Dorsolateral prefrontal cortex (tissue), 120 donors: ENCODE measurements at regions of chr19 and their contacts with region 1.

Region 1: GRCh38 chr19:40529093-40529954 is 47.3 kb upstream of the SHKBP1 start:
- DNase-seq: peak; percentile 65 to 91 (median 86)
- H3K4me3 ChIP-seq: peak overlapping the region; percentile 31 to 78 (median 62)
- H3K27ac ChIP-seq: peak overlapping the region in 57 of 59 donors; percentile 2 to 96 (median 80)
- H3K27me3 ChIP-seq: no peaks in the 10 kb centered on the region
- CTCF ChIP-seq: peak; percentile 87 to 99 (median 97)

Region 2: GRCh38 chr19:40294560-40294959 is 234.8 kb before region 1 on chr19:
- intact Hi-C with region 1: no loop called
- DNase-seq: peak in 5 of 10 donors; percentile 50 to 74 (median 68)
- H3K4me3 ChIP-seq: peak overlapping the region in 1 of 59 donors; percentile 26
- H3K27ac ChIP-seq: peak overlapping the region in 58 of 59 donors; percentile 21 to 98 (median 88)
- H3K27me3 ChIP-seq: no peaks in the 10 kb centered on the region
- CTCF ChIP-seq: peak in 1 of 56 donors; percentile 6

Region 3: DNA sequence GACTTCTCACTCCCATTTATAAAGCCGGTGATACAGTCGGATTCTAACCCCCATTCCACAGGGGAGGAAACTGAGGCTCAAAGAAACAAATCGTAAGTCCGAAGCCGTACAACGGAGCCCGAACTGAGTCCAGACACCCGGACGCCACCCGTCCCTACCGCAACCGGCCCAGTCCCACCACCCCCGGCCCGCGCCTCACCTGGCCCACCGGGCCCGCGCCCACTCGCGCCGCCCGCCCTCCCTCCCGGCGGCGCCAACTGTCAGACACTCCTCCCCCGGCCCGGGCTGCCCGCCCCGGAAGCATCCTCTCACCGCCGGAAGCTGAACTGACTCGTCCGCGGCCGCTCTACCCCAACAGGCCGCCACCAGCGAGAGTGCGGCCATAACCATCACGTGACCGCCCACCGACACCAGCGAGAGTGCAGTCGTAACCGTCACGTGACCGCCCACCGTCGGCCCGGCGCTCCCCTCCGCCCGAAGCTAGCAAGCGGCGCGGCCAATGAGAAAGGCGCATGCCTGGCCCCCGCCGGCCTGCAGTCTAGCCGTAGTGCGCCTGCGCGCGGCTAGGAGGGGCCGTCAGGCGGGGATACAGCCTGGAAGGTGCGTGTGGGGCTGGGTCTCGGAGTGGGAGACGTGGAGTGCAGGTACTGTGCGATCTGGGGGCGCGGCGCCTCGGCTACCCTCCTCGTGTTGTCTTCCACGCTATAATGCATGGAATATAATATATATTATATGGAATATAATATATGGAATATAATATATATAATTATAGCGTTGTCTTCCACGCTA is 181.0 kb before region 1 on chr19 and contains the starts of genes C19orf47 and PLD3:
- intact Hi-C with region 1: loop called in 1 of 2 experiments (anchors 5 kb)
- DNase-seq: peak; percentile 99 to 100 (median 100)
- H3K4me3 ChIP-seq: peak within 1 kb of the TSS; percentile 55 to 98 (median 86)
- H3K27ac ChIP-seq: peak within 1 kb of the TSS in 58 of 59 donors; percentile 4 to 95 (median 84)
- H3K27me3 ChIP-seq: no peaks in the 10 kb centered on the region
- CTCF ChIP-seq: peak in 26 of 56 donors; percentile 6 to 54 (median 29)
- total RNA-seq, gene C19orf47: 26.8 to 54.6 (median 37.4) TPM
- total RNA-seq, gene PLD3: 322 to 718 (median 553) TPM

Region 4: GRCh38 chr19:40465557-40466150 is 63.7 kb before region 1 on chr19 and contains the start of gene BLVRB:
- intact Hi-C with region 1: loop called in 1 of 2 experiments (anchors 2 kb)
- DNase-seq: peak; percentile 99 to 100 (median 100)
- H3K4me3 ChIP-seq: peak within 1 kb of the TSS; percentile 41 to 97 (median 78)
- H3K27ac ChIP-seq: peak within 1 kb of the TSS; percentile 26 to 95 (median 81)
- H3K27me3 ChIP-seq: no peaks in the 10 kb centered on the region
- CTCF ChIP-seq: peak in 31 of 56 donors; percentile 8 to 64 (median 29)
- total RNA-seq, gene BLVRB: 22.5 to 59.4 (median 36.1) TPM

Region 5: DNA sequence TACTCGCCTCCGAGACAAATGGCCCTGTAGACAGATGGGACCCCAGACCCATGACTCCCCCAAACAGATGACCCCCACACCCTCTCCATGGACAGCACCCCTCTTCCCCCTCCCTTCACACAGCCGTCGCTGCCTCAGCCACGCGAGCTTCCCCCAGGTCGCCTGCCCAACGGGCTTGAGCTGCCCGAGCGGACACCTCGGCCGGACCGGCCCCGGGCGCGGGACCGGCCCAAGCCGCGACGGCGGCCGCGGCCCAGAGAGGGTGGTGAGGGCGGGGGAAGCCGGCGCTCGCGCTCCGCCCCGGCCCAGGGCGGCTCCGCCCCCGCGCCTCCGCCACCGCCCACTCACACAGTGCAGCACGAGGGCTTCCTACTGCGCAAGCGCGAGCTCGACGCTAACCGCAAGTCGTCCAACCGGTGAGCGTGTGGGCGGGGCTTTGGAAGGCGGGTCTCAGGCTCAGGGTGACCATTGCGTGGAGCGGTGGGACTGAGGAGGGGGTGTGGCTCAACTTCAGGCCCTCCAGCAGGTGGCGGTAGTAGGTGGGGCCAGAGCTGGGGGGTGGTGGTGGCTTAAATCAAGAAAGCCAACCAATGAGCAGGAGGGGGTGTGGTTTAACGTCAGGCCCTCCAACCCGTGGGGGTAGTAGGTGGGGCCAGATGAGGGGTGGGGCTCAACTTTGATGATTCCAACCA is 41.1 kb after region 1 on chr19:
- intact Hi-C with region 1: loop called in 1 of 2 experiments (anchors 2 kb)
- DNase-seq: peak; percentile 85 to 99 (median 98)
- H3K4me3 ChIP-seq: peak overlapping the region in 56 of 59 donors; percentile 20 to 65 (median 44)
- H3K27ac ChIP-seq: peak overlapping the region in 36 of 59 donors; percentile 10 to 80 (median 54)
- H3K27me3 ChIP-seq: peaks cover 0 to 5% (median 0%) of the 10 kb centered on the region in 45 donors
- CTCF ChIP-seq: peak in 23 of 56 donors; percentile 17 to 64 (median 49)

Region 6: GRCh38 chr19:40580619-40581018 is 51.3 kb after region 1 on chr19:
- intact Hi-C with region 1: no loop called
- DNase-seq: no peak
- H3K4me3 ChIP-seq: no peak overlapping the region
- H3K27ac ChIP-seq: no peak overlapping the region
- H3K27me3 ChIP-seq: no peaks in the 10 kb centered on the region
- CTCF ChIP-seq: no peak

Region 7: DNA sequence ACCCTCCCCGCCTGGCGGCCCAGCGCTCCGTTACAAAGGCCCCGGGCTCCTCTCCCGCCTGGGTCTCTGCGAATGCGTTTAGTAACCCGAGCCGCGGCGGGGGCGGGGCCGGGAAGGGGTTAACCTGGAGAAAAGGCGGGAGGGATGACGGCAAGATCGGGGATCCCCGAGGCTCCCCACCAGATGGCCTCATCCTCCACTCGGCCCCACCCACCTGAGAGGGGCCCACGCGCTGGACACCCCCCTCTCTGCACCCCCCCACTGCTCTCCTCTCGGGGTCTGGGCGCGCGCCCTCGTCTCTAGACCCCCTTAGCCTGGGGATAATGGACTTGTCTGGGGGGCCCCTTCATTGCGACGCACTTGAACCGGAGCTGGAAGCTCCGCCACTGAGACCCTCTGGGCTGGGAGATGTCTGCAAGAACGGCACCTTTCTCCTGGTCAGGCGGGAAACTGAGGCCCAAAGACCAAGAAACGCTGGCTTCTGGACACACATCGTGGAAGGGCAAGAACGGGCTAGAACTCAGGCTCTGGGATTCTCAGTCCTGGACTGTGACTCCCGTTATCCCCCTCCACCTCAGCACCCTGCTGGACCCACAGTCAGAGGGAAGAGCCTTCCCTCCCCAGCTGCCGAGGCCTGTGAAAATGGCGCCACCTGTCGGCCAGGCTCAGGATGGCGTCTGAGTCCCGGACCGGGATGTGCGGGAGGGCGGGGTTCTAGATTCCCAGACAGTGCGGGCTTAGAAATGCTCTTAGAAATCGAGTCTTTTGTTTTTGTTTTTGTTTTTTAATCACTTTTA is 69.0 kb after region 1 on chr19:
- intact Hi-C with region 1: loop called (anchors 2 kb)
- DNase-seq: peak; percentile 80 to 92 (median 87)
- H3K4me3 ChIP-seq: peak overlapping the region in 41 of 59 donors; percentile 1 to 52 (median 26)
- H3K27ac ChIP-seq: no peak overlapping the region
- H3K27me3 ChIP-seq: peaks cover 0 to 15% (median 0%) of the 10 kb centered on the region in 45 donors
- CTCF ChIP-seq: peak; percentile 82 to 100 (median 98)

Region 8: DNA sequence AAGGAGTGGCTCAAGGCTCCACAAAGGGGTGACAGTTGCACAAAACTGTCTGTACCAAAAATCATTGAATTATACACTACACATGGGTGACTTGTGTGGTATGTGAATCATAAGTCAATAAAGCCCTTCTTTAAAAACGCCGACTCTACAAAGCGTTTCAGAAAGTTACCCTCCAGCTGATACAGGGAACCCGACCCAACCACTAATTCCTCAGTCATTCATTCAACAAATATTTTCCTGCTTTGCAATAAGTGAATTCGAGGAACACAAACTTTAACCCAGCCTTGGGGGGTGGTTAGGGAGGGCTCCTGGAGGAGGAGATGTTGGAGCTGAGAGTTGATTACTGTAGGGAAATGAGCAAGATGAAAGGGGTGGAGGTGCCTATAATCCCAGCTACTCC is 103.9 kb after region 1 on chr19:
- intact Hi-C with region 1: loop called in 1 of 2 experiments (anchors 10 kb)
- DNase-seq: no peak
- H3K4me3 ChIP-seq: no peak overlapping the region
- H3K27ac ChIP-seq: no peak overlapping the region
- H3K27me3 ChIP-seq: peaks cover 0 to 2% (median 0%) of the 10 kb centered on the region in 45 donors
- CTCF ChIP-seq: no peak